Common myeloid progenitor, CD34-positive (primary cell): ENCODE measurements at regions of chr14 and their contacts with region 1.

Region 1: DNA sequence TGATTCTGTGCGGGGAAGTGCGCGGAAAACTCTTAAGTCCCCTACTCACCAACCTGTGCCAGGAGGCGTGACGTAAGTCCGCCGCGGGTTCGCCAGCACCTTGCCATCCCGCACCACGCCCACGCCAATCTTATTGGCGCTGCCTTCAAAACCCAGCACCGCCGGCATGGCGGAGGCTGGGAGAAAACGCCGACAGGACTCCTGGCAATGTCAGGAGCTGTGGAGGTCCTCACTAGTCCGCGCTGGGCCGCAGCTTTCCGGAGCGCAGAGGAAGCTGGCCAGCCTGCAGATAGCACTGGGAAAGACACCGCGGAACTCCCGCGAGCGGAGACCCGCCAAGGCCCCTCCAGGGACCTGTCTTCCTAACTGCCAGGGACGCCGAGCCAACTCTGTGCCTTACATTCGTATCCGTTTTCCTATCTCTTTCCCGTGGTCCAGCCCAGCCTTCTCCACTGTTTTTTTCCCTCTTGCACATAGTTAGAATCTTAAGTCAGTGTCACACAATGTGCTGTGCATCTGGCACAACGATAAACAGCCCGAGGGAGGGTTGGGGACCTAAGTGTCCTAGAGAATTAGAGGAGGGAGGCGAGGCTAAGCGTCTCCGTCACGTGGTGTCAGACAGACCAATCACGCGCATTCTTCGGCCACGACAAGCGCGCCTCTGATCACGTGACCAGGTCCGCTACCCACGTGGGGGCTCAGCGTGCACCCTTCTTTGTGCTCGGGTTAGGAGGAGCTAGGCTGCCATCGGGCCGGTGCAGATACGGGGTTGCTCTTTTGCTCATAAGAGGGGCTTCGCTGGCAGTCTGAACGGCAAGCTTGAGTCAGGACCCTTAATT is at the starts of genes APEX1 and OSGEP:
- DNase-seq: peak; percentile 99 to 100 (median 100)
- H3K4me3 ChIP-seq: peak within 1 kb of the TSS; percentile 89 to 98 (median 93)
- H3K27ac ChIP-seq: peak within 1 kb of the TSS; percentile 98 to 99
- H3K4me1 ChIP-seq: peaks cover 7 to 49% (median 28%) of the 10 kb centered on the region in 4 experiments
- H3K27me3 ChIP-seq: no peaks in the 10 kb centered on the region

Region 2: DNA sequence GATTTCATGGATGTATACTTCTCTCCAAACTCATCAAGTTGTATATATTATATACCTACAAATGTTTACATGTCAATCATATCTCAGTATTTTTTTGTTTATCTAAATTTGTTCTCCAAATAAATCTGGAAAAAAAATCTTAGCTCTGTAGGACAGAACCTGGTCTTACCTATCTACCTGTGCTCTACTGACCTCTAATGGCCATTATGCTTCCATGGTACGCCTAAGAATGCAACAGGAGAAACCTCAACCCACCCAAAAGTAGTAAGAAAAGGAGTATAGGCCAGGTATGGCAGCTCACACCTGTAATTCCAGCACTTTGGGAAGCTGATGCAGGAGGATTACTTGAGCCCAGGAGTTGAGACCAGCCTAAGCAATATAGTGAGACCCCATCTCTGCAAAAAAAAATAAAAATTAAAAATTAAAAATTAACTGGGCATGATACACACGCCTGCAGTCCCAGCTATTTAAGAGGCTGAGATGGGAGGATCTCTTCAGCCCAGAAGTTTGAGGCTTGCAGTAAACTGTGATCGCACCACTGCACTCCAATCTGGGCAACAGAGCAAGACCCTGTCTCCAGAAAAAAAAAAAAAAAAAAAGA is 207.0 kb before region 1 on chr14:
- CTCF ChIA-PET with region 1: no interaction called
- POLR2A ChIA-PET with region 1: no interaction called
- DNase-seq: peak in 2 of 3 donors; percentile 23 to 24
- H3K4me3 ChIP-seq: no peak overlapping the region
- H3K27ac ChIP-seq: no peak overlapping the region
- H3K4me1 ChIP-seq: no peaks in the 10 kb centered on the region
- H3K27me3 ChIP-seq: no peaks in the 10 kb centered on the region

Region 3: DNA sequence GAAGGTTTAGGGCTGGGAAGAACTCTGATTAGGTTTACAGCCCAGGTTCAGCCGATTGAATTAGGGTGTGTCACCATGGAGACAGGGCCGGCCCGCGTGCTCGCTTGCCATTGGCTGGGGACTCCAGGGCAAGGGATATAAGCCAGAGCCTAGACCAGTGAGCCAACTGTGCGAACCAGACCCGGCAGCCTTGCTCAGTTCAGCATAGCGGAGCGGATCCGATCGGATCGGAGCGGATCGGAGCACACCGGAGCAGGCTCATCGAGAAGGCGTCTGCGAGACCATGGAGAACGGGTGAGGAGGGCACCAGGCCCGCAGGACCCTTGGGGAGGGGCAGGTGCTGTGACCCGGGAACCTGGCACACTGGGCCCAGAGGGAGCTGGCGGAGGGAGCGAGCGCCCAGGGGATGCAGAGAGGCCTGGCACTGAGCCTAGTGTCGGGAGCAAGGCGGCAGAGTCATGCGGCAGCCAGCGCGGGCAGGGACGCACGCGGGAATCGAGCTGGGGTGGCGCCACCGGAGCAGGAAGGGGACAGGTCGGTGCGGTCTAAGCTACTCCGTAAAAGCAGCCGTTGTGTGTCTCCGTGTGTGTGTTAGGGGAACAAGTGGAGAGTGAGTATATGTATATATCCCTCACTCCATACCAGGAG is 14.6 kb after region 1 on chr14 and contains the start of gene PNP:
- CTCF ChIA-PET with region 1: no interaction called
- POLR2A ChIA-PET with region 1: interaction called, 15 read pairs
- DNase-seq: peak; percentile 87 to 95 (median 94)
- H3K4me3 ChIP-seq: peak within 1 kb of the TSS; percentile 74 to 98 (median 87)
- H3K27ac ChIP-seq: peak within 1 kb of the TSS; percentile 68 to 88
- H3K4me1 ChIP-seq: peaks cover 8 to 28% (median 23%) of the 10 kb centered on the region in 4 experiments
- H3K27me3 ChIP-seq: no peaks in the 10 kb centered on the region